Right lobe of liver (tissue), 6 donors: ENCODE measurements at regions of chr1 and their contacts with region 1.

Region 1: DNA sequence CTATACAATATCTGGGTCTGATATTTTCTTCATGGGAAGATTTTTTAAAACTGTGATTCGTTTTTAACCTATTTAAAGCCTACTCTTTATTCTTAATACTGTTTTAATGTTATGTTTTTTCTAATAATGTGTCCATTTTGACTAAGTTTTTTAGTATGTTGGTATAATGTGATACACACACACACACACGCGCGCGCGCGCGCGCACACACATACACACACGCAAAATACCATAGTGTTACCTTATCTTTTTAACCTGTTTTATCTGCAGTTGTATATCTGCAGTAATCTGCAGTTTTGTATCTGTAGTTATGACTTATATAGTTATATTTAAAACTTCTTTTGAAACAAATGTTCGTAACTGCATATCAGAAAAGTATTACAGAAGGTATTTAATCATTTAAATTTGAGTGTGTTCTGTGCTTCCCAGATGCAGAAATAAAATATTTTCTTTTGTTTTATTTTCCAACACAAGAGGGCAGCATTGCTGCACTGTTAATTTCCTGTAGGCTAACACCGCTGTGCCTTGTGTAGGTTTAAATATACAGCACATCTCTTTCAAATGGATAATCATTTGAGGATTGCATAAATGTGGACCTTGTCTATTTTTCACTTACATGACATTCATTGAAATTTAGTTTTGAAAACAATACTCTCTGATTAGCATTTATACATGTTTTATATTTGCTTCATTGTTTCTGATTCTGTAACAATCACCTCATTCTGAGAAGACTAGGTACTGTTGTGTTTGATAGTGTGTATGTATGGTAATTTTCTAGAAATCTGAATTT is 166.1 kb downstream of the PDE4B start:
- DNase-seq: no peak
- ATAC-seq: peak; percentile 77 to 89 (median 80)
- H3K4me3 ChIP-seq: no peak overlapping the region
- H3K27ac ChIP-seq: no peak overlapping the region
- H3K4me1 ChIP-seq: no peaks in the 10 kb centered on the region
- H3K27me3 ChIP-seq: no peaks in the 10 kb centered on the region
- CTCF ChIP-seq: peak; percentile 72 to 89 (median 78)
- POLR2A ChIP-seq: no peak

Region 2: GRCh38 chr1:65911679-65912078 is 47.1 kb before region 1 on chr1:
- intact Hi-C with region 1: no loop called
- DNase-seq: no peak
- ATAC-seq: no peak
- H3K4me3 ChIP-seq: no peak overlapping the region
- H3K27ac ChIP-seq: no peak overlapping the region
- H3K4me1 ChIP-seq: no peaks in the 10 kb centered on the region
- H3K27me3 ChIP-seq: no peaks in the 10 kb centered on the region
- CTCF ChIP-seq: no peak
- POLR2A ChIP-seq: no peak

Region 3: DNA sequence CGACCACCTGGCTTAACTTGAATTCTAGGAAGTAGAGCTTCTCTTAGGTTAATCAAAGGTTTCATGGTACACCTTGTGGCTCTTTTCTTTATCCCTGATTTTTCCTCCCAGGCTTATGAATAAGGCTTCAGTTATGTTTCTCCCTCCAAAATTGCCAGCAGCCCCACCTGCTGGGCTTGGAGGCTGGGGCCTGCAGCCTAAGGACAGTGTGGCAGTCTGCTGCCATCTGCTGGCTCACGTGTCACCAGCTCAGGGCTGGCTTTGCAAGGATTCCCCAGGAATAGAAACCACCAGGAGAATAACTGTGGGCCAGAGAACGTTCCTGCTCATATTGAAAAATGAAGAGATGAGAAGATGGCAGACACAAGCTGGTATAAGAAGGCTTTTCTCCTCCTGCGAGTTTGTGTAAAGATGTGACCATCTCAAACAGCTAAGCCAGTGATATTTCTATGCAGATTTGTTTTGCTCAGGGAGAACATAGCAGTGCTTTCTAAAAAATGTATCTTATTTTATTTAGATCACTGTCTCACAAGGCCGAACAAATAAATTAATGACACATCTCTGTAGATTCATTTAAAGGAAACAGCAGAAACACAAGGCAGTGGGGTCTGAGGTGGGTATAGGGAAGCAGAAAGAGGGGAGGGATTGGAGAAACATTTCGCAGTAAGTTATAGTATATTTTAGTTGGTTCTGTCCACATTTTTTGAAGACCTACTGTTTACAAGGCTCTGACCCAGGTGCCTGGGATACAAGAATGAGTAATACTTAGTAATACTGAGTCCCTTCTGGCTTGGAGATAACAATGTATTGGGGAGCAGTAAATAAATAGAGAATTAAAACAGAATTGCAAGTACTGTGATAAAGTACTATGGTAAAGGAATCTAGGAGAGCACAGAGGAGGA is 284.1 kb after region 1 on chr1:
- intact Hi-C with region 1: loop called (anchors 5 kb)
- DNase-seq: peak; percentile 84 to 88 (median 87)
- ATAC-seq: peak; percentile 99 to 100 (median 100)
- H3K4me3 ChIP-seq: no peak overlapping the region
- H3K27ac ChIP-seq: no peak overlapping the region
- H3K4me1 ChIP-seq: no peaks in the 10 kb centered on the region
- H3K27me3 ChIP-seq: no peaks in the 10 kb centered on the region
- CTCF ChIP-seq: peak; percentile 99 to 100 (median 100)
- POLR2A ChIP-seq: no peak